MCF 10A (cell line): ENCODE measurements at regions of chr2 and their contacts with region 1.

Region 1: DNA sequence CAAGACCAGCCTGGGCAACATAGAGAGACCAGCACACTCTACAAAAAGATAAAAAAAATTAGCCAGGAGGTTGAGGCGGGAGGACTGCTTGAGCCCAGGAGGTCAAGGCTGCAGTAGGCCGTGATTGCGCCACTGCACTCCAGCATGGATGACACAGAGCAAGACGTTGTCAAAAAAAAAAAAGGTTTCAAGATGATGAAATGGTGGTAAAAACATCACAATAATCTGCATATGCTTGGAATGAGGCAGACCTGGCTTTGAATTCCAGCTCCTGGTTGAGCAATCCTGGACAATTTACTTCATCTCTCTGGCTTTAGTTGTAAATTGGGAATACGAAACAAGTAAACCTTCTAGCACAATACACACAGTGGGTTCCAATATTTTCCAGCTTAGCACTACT is 24.1 kb downstream of the USP40 start:
- DNase-seq: peak; percentile 87
- H3K4me3 Mint-ChIP-seq: no peak overlapping the region
- H3K27ac Mint-ChIP-seq: peak overlapping the region; percentile 80
- H3K4me1 Mint-ChIP-seq: peaks cover 11% of the 10 kb centered on the region
- H3K27me3 Mint-ChIP-seq: no peaks in the 10 kb centered on the region
- CTCF ChIP-seq: no peak

Region 2: DNA sequence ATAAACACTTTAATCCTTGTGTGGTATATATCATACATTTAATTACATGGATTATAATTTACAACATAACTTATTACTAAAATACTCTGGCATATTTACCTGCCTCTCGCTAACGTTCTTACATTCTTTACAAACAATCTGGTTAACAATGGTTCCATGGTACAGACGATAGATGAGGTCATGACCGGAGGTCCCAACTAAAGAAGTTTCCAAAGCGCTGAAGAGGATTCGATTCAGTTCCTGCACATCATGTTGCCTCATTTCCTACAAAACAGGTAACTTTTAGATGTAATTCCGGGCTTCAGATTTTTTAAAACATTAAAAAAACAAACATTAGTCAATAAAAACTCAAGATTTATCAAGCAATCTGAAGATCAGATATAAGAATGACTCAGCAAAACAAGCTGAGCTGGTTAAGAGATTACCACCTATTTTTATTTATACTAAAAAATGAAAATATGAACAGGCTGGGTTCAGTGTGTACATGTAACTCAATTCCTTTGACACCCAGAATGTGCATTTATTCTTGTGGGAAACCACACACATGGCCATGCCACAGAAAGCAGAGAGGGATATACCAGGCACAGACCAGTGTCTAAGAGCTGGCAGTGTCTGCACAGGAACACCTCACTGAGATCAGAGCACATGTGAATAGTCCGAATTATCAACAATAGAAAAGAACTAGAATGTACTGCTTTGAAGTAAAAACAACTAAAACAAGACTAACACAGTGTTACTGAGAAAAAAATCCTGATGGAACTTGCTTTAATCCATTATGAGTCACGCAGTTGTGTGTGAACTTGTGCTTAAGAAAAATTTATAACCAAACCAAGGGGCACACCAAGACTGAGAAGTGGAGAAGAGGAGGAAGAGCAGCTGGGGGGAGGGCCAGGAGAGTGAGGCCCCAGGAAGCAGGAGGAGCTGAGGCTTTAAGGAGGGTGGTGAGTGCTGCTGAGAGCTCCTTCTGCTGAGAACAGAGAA is 14.5 kb after region 1 on chr2:
- CTCF ChIA-PET with region 1: no interaction called
- POLR2A ChIA-PET with region 1: interaction called, 10 read pairs
- intact Hi-C with region 1: no loop called
- DNase-seq: peak; percentile 76
- H3K4me3 Mint-ChIP-seq: peak overlapping the region; percentile 2
- H3K27ac Mint-ChIP-seq: peak overlapping the region; percentile 73
- H3K4me1 Mint-ChIP-seq: peaks cover 13% of the 10 kb centered on the region
- H3K27me3 Mint-ChIP-seq: no peaks in the 10 kb centered on the region
- CTCF ChIP-seq: no peak